GM18951 (cell line): ENCODE measurements at regions of chr11 and their contacts with region 1.

Region 1: GRCh38 chr11:17063171-17064002 is 14.1 kb downstream of the RPS13 start:
- POLR2A ChIP-seq: no peak

Region 2: DNA sequence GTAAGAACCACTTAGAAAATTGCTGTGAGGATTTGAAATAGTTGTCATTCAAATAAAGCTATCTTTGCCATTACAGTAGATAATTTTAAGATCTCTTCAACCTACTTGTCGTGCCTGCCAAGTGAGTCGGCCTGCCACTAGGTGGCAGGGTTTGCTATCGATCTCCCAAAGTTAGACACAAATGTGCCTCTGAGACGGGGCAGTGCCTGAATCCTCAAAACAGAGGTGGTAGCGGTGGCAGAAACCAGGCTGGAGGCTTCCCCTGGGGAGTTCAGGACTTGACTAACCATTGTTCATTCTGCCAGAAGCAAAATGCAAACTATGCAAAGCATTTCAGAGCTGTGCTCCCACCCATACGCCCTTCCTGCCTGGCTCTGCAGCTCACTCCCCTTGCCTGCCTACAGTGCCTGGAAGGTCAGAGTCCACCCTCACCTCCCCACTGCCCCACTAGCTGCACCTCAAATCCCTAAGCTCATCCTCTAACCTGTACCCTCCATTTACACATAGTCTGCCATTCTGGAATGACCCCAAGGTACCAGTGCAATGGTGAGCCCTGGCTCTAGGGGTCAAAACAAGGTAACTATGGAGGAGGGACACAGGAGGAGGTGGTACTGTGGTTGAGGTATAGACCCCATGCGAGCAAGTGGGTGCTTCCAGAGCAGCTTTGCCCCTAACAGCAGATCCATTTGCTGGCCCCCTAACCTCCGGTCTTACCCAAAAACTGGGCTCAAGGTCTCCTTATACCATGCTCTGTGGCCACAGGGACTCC is 242.9 kb before region 1 on chr11:
- in situ Hi-C with region 1: loop called (anchors 25 kb)
- POLR2A ChIP-seq: no peak

Region 3: DNA sequence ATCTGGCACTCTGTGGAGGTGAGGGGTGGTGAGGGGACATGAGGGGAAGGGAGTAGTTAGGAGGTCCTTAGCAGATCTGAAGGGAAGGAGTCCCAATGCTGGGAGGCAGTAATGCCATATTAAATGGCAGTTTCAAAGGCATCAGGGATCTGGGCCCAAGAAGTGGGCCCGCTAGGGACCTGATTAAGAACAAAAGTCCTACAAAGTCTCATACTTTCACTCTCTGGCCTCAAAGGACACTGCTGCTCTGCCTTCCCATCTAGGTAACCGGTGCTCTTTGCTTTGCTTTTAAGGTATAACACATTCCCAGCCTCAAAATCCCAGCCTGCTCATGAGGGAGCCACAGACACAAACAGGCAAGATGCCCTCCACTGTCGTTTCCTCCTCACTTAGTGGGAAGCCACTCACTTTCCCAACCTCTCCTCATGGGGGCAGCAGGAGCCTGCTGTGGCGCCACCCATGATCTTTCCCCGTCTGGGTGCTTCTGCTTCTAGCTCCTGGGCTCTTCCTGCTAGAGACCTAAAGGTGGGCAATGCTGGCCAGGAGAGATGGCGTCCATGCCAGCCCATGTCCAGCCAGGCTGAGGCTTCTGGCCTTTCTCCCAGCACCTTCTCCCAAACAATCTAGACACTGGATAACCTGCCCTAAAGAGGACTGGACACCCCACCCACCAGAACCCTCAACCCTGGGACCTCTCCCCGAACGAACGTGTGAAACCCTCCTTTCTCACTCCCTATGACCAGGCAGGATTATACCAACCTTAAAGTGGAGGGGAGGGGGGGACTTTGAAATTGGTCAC is 117.5 kb before region 1 on chr11:
- in situ Hi-C with region 1: loop called (anchors 5 kb)
- POLR2A ChIP-seq: no peak

Region 4: GRCh38 chr11:17154409-17155159 is 91.2 kb after region 1 on chr11:
- in situ Hi-C with region 1: no loop called
- POLR2A ChIP-seq: no peak